Activated T-helper 2 cell treated with anti-CD3 and anti-CD28 coated beads, Interferon-gamma antibody, Interleukin-2, Interleukin-4, amounts not matched to agents 10 μg/mL and 5 μg/mL and 100 μg/mL, durations not matched to agents 14 hours and 24 hours and 36 hours (primary cell): ENCODE measurements at regions of chr12 and their contacts with region 1.

Region 1: GRCh38 chr12:9634177-9634803 is 26.6 kb upstream of the KLRB1 start:
- DNase-seq: peak; percentile 58
- H3K4me3 Mint-ChIP-seq: no peak overlapping the region
- H3K27ac Mint-ChIP-seq: peak overlapping the region; percentile 13
- H3K4me1 Mint-ChIP-seq: peaks cover 43% of the 10 kb centered on the region
- H3K27me3 Mint-ChIP-seq: peaks cover 2% of the 10 kb centered on the region

Region 2: DNA sequence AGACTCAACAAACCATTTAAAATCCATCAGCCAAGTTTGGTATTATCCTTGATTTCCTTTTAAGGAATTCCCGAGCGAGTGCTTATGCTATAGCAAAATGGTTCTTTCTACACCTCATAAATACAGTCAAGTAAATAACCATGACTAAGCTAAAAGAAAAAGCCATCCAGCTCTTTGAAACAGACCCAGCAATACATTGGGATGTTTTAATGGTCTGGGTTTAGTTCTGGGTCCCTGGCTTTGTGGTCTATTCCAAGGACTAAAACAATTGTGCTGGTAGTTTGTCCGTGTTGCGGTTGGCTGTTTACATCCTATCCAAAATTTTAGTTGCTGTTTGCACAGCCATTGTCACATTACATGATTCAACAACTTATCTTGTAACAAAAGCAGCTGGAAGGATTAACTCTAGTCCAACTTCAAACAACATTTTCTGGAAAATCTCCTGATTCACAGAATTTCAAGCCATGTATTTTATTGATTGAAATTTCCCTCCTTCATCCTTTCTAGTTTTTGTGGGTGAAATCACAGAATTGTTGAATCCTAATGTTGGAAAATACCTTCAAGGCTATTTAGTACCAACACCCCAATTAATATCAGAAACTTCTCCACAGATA is 46.2 kb before region 1 on chr12:
- intact Hi-C with region 1: no loop called
- DNase-seq: no peak
- H3K4me3 Mint-ChIP-seq: no peak overlapping the region
- H3K27ac Mint-ChIP-seq: no peak overlapping the region
- H3K4me1 Mint-ChIP-seq: no peaks in the 10 kb centered on the region
- H3K27me3 Mint-ChIP-seq: peaks cover 7% of the 10 kb centered on the region

Region 3: GRCh38 chr12:9707864-9708808 is 73.8 kb after region 1 on chr12:
- intact Hi-C with region 1: loop called (anchors 1 kb)
- DNase-seq: peak; percentile 50
- H3K4me3 Mint-ChIP-seq: peak overlapping the region; percentile 58
- H3K27ac Mint-ChIP-seq: peak overlapping the region; percentile 79
- H3K4me1 Mint-ChIP-seq: peaks cover 39% of the 10 kb centered on the region
- H3K27me3 Mint-ChIP-seq: no peaks in the 10 kb centered on the region